OCI-LY7 (cell line): ENCODE measurements at regions of chr4 and their contacts with region 1.

Region 1: DNA sequence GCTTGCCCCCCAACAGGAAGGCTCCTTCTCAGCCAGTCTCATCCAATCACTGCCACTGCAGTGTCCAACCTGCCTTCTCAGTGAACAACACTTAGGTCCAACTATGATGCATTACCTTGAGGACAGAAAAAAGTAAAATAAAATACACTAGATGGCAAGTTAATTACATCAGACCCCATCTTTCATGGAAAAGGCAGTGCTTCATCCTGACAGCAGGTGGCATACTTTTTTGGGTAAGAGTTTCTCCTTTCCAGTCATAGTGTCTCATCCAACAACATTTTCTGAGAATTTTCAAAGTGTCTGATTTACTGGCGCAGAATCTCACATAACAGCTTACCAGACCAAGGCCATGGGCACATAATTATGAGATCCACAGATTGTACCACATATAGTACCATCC is 1742.8 kb downstream of the PCDH7 start:
- DNase-seq: peak; percentile 52
- H3K4me3 ChIP-seq: no peak overlapping the region
- H3K27ac ChIP-seq: no peak overlapping the region
- H3K4me1 ChIP-seq: no peaks in the 10 kb centered on the region
- CTCF ChIP-seq: peak; percentile 84

Region 2: GRCh38 chr4:32775032-32775431 is 312.1 kb after region 1 on chr4:
- CTCF ChIA-PET with region 1: interaction called, 3 read pairs
- POLR2A ChIA-PET with region 1: interaction called, 3 read pairs
- intact Hi-C with region 1: loop called (anchors 1 kb)
- DNase-seq: peak; percentile 58
- H3K4me3 ChIP-seq: no peak overlapping the region
- H3K27ac ChIP-seq: no peak overlapping the region
- H3K4me1 ChIP-seq: no peaks in the 10 kb centered on the region
- CTCF ChIP-seq: peak; percentile 77